ENCODE measurements at regions of chr20 and their contacts with region 1.

Region 1: GRCh38 chr20:63223221-63224207 is 7.6 kb upstream of the YTHDF1 start:
- DNase-seq: peak; percentile 81
- ATAC-seq: peak; percentile 71
- H3K4me3 Mint-ChIP-seq: no peak overlapping the region
- H3K27ac Mint-ChIP-seq: no peak overlapping the region
- H3K4me1 Mint-ChIP-seq: peaks cover 2% of the 10 kb centered on the region
- H3K27me3 Mint-ChIP-seq: peaks cover 4% of the 10 kb centered on the region; the same call in 1 of the 2 replicates
- CTCF ChIP-seq: peak; percentile 81

Region 2: GRCh38 chr20:63071541-63072181 is 151.9 kb before region 1 on chr20:
- CTCF ChIA-PET with region 1: interaction called, 12 read pairs
- POLR2A ChIA-PET with region 1: no interaction called
- DNase-seq: peak; percentile 80
- ATAC-seq: peak; percentile 90
- H3K4me3 Mint-ChIP-seq: peak overlapping the region; percentile 51
- H3K27ac Mint-ChIP-seq: no peak overlapping the region
- H3K4me1 Mint-ChIP-seq: peaks cover 4% of the 10 kb centered on the region
- H3K27me3 Mint-ChIP-seq: peaks cover 35% of the 10 kb centered on the region
- CTCF ChIP-seq: no peak

Region 3: DNA sequence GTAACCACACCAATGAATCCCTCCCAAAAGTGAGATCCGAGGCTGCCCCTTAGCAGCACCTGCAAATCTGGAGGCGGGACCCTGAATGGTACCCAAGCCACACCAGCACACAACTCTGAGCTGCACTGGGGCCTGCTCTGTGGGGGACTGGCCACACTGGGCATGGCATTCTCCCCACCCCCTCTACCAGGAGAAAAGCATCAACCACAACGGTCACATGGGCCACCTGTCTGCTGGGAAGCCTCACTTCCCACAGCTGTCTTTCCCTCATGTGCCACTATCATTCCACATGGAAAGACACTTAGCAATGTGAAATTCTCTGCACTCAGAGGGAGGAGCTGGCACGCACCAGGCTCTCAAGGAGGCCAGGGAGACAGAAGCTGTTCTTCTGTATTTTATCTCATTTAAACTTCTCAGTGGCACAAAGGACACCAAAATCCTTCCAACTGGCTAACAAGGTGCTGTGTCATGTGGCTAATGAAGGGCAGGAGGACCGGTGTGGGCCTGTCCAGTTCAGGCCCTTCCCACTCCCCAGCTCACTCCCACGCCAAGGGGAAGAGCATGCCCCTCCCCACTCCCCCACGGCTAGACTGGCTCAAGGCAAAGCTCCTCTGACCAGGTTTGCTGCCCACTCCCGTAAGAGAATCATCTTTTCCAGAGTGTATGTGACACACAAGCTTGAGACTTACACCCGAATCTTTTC is 26.6 kb before region 1 on chr20:
- CTCF ChIA-PET with region 1: interaction called, 30 read pairs
- POLR2A ChIA-PET with region 1: no interaction called
- DNase-seq: no peak
- ATAC-seq: no peak; the same call in 1 of the 2 replicates
- H3K4me3 Mint-ChIP-seq: no peak overlapping the region
- H3K27ac Mint-ChIP-seq: peak overlapping the region; percentile 80
- H3K4me1 Mint-ChIP-seq: peaks cover 23% of the 10 kb centered on the region
- H3K27me3 Mint-ChIP-seq: no peaks in the 10 kb centered on the region
- CTCF ChIP-seq: no peak

Region 4: GRCh38 chr20:63246490-63247288 is 23.2 kb after region 1 on chr20:
- CTCF ChIA-PET with region 1: interaction called, 173 read pairs
- POLR2A ChIA-PET with region 1: no interaction called
- DNase-seq: peak; percentile 54
- ATAC-seq: peak; percentile 71
- H3K4me3 Mint-ChIP-seq: no peak overlapping the region
- H3K27ac Mint-ChIP-seq: no peak overlapping the region
- H3K4me1 Mint-ChIP-seq: peaks cover 3% of the 10 kb centered on the region
- H3K27me3 Mint-ChIP-seq: peaks cover 7% of the 10 kb centered on the region; the same call in 1 of the 2 replicates
- CTCF ChIP-seq: no peak

Region 5: DNA sequence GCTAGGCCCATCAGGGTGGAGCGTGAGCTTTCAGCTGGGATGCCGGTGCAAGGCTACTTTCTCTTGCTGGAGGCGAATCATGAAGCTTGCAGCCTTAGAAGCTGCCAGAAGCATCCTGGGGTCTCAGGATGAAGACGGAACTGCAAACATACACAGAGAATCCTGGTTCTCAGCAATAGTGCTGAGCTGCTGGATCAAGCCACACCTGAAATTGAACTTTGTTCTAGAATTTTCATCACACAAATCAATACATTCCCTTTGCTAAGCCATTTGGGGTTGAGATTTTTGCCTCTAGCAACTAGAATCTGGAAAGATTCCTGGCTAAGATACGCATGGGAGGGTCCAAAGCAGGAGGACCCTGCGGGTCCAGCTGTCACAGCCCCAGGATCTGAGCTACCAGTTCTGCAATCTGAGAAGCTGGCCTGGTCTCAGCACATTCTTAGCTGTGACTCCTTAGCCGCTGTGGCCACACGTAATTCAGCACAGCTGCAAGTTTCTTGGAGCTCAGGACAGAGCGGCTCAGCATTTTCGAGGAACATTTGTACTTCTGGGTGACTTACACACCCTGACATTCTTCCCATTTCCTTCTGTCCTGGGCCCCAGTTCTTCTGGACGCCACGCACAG is 42.5 kb after region 1 on chr20:
- CTCF ChIA-PET with region 1: interaction called, 43 read pairs
- POLR2A ChIA-PET with region 1: no interaction called
- DNase-seq: no peak
- ATAC-seq: no peak
- H3K4me3 Mint-ChIP-seq: no peak overlapping the region
- H3K27ac Mint-ChIP-seq: no peak overlapping the region
- H3K4me1 Mint-ChIP-seq: peaks cover 9% of the 10 kb centered on the region
- H3K27me3 Mint-ChIP-seq: no peaks in the 10 kb centered on the region; the same call in 1 of the 2 replicates
- CTCF ChIP-seq: no peak

Region 6: GRCh38 chr20:63290677-63291472 is 67.4 kb after region 1 on chr20:
- CTCF ChIA-PET with region 1: interaction called, 59 read pairs
- POLR2A ChIA-PET with region 1: no interaction called
- DNase-seq: peak; percentile 86
- ATAC-seq: peak; percentile 80
- H3K4me3 Mint-ChIP-seq: no peak overlapping the region
- H3K27ac Mint-ChIP-seq: no peak overlapping the region
- H3K4me1 Mint-ChIP-seq: peaks cover 15% of the 10 kb centered on the region
- H3K27me3 Mint-ChIP-seq: peaks cover 5% of the 10 kb centered on the region
- CTCF ChIP-seq: peak; percentile 94

Region 7: GRCh38 chr20:63366390-63367365 is 143.2 kb after region 1 on chr20:
- CTCF ChIA-PET with region 1: interaction called, 11 read pairs
- POLR2A ChIA-PET with region 1: no interaction called
- DNase-seq: no peak
- ATAC-seq: no peak
- H3K4me3 Mint-ChIP-seq: no peak overlapping the region
- H3K27ac Mint-ChIP-seq: no peak overlapping the region; the same call in 1 of the 2 replicates
- H3K4me1 Mint-ChIP-seq: peaks cover 18% of the 10 kb centered on the region
- H3K27me3 Mint-ChIP-seq: peaks cover 9% of the 10 kb centered on the region
- CTCF ChIP-seq: no peak

Region 8: GRCh38 chr20:63457737-63458136 is 234.2 kb after region 1 on chr20:
- CTCF ChIA-PET with region 1: no interaction called
- POLR2A ChIA-PET with region 1: no interaction called
- DNase-seq: no peak
- ATAC-seq: no peak
- H3K4me3 Mint-ChIP-seq: no peak overlapping the region
- H3K27ac Mint-ChIP-seq: no peak overlapping the region; the same call in 1 of the 2 replicates
- H3K4me1 Mint-ChIP-seq: peaks cover 32% of the 10 kb centered on the region
- H3K27me3 Mint-ChIP-seq: no peaks in the 10 kb centered on the region
- CTCF ChIP-seq: no peak

Region 9: GRCh38 chr20:63567136-63567385 is 343.5 kb after region 1 on chr20:
- CTCF ChIA-PET with region 1: no interaction called
- POLR2A ChIA-PET with region 1: no interaction called
- DNase-seq: no peak
- ATAC-seq: no peak
- H3K4me3 Mint-ChIP-seq: no peak overlapping the region
- H3K27ac Mint-ChIP-seq: no peak overlapping the region
- H3K4me1 Mint-ChIP-seq: no peaks in the 10 kb centered on the region
- H3K27me3 Mint-ChIP-seq: no peaks in the 10 kb centered on the region
- CTCF ChIP-seq: no peak

Measured in WTC11 (cell line).